Activated naive CD4-positive, alpha-beta T cell treated with anti-CD3 and anti-CD28 coated beads for 36 hours (primary cell): ENCODE measurements at regions of chr13 and their contacts with region 1.

Region 1: DNA sequence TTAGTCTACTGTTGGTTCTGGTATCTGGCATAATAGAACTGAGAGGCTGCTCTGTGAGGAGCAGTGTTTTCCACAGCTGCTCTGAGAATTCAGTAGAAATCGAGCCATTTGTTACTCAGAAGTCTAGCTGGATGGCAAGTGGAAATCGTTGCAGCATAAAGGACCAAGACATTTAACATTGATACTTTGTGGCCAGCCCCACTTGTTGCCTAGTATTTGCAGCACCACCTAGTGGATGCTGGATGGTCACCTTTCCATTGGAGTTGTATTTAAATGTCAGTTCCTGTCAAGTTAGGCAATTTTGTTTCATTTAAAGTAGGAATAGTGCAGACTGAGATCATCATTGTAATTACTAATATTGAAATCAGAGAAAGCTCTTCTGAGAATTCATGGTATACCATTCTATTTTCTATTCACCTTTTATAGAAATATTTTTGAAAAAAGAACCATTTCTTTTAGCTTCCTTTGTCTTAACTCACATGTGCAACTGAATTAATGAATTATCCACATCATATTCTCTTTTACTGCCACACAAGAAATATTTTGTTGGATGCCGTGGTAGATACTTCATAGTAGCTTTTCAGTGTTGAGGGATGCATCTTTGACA is 64.6 kb downstream of the PDS5B start:
- DNase-seq: peak; percentile 79
- H3K4me3 Mint-ChIP-seq: no peak overlapping the region
- H3K27ac Mint-ChIP-seq: peak overlapping the region; percentile 12
- H3K4me1 Mint-ChIP-seq: peaks cover 39% of the 10 kb centered on the region
- H3K27me3 Mint-ChIP-seq: no peaks in the 10 kb centered on the region

Region 2: DNA sequence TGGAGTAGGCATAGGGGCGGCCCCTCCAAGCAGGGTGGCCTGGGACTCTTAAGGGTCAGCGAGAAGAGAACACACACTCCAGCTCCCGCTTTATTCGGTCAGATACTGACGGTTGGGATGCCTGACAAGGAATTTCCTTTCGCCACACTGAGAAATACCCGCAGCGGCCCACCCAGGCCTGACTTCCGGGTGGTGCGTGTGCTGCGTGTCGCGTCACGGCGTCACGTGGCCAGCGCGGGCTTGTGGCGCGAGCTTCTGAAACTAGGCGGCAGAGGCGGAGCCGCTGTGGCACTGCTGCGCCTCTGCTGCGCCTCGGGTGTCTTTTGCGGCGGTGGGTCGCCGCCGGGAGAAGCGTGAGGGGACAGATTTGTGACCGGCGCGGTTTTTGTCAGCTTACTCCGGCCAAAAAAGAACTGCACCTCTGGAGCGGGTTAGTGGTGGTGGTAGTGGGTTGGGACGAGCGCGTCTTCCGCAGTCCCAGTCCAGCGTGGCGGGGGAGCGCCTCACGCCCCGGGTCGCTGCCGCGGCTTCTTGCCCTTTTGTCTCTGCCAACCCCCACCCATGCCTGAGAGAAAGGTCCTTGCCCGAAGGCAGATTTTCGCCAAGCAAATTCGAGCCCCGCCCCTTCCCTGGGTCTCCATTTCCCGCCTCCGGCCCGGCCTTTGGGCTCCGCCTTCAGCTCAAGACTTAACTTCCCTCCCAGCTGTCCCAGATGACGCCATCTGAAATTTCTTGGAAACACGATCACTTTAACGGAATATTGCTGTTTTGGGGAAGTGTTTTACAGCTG is 335.4 kb before region 1 on chr13 and contains the starts of genes BRCA2 and ZAR1L:
- CTCF ChIA-PET with region 1: no interaction called
- intact Hi-C with region 1: loop called (anchors 5 kb)
- DNase-seq: peak; percentile 91
- H3K4me3 Mint-ChIP-seq: peak within 1 kb of the TSS; percentile 92
- H3K27ac Mint-ChIP-seq: peak within 1 kb of the TSS; percentile 98
- H3K4me1 Mint-ChIP-seq: peaks cover 12% of the 10 kb centered on the region
- H3K27me3 Mint-ChIP-seq: no peaks in the 10 kb centered on the region
- total RNA-seq, gene BRCA2: 17.3 to 21.3 TPM
- total RNA-seq, gene ZAR1L: not detected

Region 3: GRCh38 chr13:32472194-32472621 is 178.6 kb before region 1 on chr13:
- CTCF ChIA-PET with region 1: interaction called, 5 read pairs
- intact Hi-C with region 1: loop called (anchors 5 kb)
- DNase-seq: no peak
- H3K4me3 Mint-ChIP-seq: no peak overlapping the region
- H3K27ac Mint-ChIP-seq: no peak overlapping the region
- H3K4me1 Mint-ChIP-seq: peaks cover 3% of the 10 kb centered on the region
- H3K27me3 Mint-ChIP-seq: no peaks in the 10 kb centered on the region

Region 4: GRCh38 chr13:32592082-32592481 is 58.7 kb before region 1 on chr13:
- CTCF ChIA-PET with region 1: interaction called, 38 read pairs
- intact Hi-C with region 1: no loop called
- DNase-seq: no peak
- H3K4me3 Mint-ChIP-seq: no peak overlapping the region
- H3K27ac Mint-ChIP-seq: no peak overlapping the region
- H3K4me1 Mint-ChIP-seq: peaks cover 69% of the 10 kb centered on the region
- H3K27me3 Mint-ChIP-seq: no peaks in the 10 kb centered on the region

Region 5: GRCh38 chr13:32627793-32628192 is 23.0 kb before region 1 on chr13:
- CTCF ChIA-PET with region 1: interaction called, 6 read pairs
- intact Hi-C with region 1: loop called (anchors 2 kb)
- DNase-seq: no peak
- H3K4me3 Mint-ChIP-seq: no peak overlapping the region
- H3K27ac Mint-ChIP-seq: no peak overlapping the region
- H3K4me1 Mint-ChIP-seq: peaks cover 49% of the 10 kb centered on the region
- H3K27me3 Mint-ChIP-seq: no peaks in the 10 kb centered on the region

Region 6: DNA sequence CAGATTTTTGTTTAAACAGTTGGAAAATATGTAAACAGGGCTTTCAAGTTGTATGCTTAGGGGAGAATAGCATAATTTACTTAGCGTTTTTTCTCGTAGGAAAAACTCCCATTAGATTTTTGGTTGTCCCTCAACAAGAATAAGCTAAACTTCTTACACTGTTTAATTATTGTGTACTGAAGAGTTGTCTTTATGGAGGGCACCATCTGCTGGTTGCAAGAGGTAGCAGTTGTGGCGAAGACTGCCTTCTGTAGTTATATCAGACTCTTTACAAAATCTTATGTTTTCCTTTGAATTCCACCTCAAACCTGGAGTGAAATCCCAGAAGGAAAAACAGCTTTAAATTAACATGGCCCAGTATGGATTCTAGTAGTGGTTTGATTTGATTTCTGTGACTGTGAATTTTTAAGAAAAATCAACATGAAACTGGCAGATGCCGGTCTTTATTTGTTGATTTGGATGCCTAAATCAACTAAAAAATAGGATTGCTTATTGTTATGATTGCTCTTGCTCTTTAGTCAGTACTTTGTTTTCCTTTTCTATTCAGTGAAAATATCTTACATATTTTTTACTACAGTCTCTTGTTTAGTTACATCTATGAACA is 11.2 kb before region 1 on chr13:
- CTCF ChIA-PET with region 1: interaction called, 40 read pairs
- intact Hi-C with region 1: loop called (anchors 1 kb)
- DNase-seq: peak; percentile 64
- H3K4me3 Mint-ChIP-seq: no peak overlapping the region
- H3K27ac Mint-ChIP-seq: no peak overlapping the region
- H3K4me1 Mint-ChIP-seq: peaks cover 31% of the 10 kb centered on the region
- H3K27me3 Mint-ChIP-seq: no peaks in the 10 kb centered on the region

Region 7: GRCh38 chr13:32911506-32911905 is 260.7 kb after region 1 on chr13:
- CTCF ChIA-PET with region 1: interaction called, 3 read pairs
- intact Hi-C with region 1: loop called (anchors 1 kb)
- DNase-seq: peak; percentile 56
- H3K4me3 Mint-ChIP-seq: no peak overlapping the region
- H3K27ac Mint-ChIP-seq: no peak overlapping the region
- H3K4me1 Mint-ChIP-seq: peaks cover 2% of the 10 kb centered on the region
- H3K27me3 Mint-ChIP-seq: peaks cover 3% of the 10 kb centered on the region